Astrocyte of the cerebellum (primary cell): ENCODE measurements at regions of chr16 and their contacts with region 1.

Region 1: DNA sequence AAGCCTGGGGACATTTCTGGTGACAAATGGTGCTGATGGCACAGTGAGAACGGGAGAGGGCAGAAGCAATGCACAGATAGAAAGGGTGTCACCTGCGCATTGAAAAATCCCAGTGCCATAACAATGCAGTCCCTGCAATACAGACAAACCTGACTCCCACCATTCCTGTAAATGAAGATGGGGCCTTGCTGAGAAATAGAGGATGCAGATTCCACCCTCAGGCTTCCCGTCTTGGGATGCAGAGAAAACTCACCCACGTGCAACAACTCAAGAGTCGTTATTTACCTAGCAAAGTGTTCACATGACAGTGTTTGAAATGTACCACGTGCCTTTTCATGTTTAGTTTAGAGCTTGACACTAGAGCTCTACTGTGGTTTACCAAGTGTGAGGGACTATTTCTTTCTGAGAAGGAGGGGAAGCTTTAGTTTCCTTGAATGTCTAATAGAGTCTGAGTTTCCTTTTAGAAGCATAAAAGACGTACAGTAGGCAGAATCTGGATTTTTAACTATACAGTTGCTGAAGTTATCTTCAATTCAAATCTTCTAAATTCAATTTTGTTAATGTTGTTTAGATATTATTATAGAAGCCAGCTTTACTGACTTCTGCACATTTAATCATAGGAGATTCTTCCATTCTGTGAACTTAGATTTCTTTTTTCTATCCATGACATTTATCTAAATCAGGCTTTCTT is 35.6 kb downstream of the WWOX start:
- DNase-seq: no peak
- H3K4me3 ChIP-seq: no peak overlapping the region
- CTCF ChIP-seq: no peak

Region 2: DNA sequence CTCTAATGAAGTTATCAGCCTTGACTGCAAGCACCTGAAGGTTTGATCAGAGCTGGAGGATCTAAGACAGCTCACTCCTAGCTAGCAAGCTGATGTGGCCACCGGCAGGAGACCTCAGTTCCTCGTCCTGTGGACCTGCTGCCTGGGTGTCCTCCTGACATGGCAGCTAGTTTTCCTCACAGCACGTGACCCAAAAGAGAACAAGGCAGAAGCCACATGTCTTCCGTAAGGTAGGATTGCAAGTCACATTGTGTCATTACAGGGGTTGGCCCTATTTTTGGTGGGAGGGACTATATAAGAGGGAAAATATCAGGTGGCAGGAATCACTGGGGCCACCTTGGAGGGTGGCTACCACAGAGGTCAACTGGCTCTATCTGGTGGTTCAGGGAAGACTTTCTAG is 53.7 kb before region 1 on chr16:
- in situ Hi-C with region 1: no loop called
- DNase-seq: no peak
- H3K4me3 ChIP-seq: no peak overlapping the region
- CTCF ChIP-seq: no peak

Region 3: GRCh38 chr16:78175287-78175686 is 40.2 kb after region 1 on chr16:
- in situ Hi-C with region 1: no loop called
- DNase-seq: no peak
- H3K4me3 ChIP-seq: no peak overlapping the region
- CTCF ChIP-seq: no peak

Region 4: DNA sequence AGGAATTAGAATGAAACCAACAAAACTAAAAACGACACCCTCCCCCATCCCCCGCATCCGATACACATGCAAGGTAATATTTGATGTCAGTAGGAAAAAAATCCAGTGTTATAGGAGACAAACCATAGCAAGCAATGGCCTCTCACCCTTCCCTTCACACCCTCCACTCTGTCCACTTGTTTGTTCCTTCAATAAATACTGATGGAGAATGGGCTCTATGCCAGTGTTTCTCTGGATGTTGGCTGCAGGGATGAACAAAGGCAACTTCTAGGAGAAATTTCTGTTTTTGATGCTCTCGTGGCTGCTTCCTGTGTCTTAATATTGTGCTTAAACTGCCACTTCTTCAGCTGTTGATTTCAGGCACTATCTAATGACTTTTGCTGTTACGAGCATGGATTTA is 63.2 kb after region 1 on chr16:
- in situ Hi-C with region 1: loop called (anchors 10 kb)
- DNase-seq: no peak
- H3K4me3 ChIP-seq: no peak overlapping the region
- CTCF ChIP-seq: no peak

Region 5: GRCh38 chr16:78209951-78210661 is 75.0 kb after region 1 on chr16:
- in situ Hi-C with region 1: no loop called
- DNase-seq: no peak
- H3K4me3 ChIP-seq: no peak overlapping the region
- CTCF ChIP-seq: no peak